ENCODE measurements at regions of chr2 and their contacts with region 1.

Region 1: GRCh38 chr2:188983427-188984064 is 9.4 kb downstream of the COL3A1 start:
- DNase-seq: no peak

Region 2: GRCh38 chr2:188524519-188525113 is 458.9 kb before region 1 on chr2:
- intact Hi-C with region 1: loop called (anchors 10 kb)
- DNase-seq: peak in 29 of 42 donors; percentile 3 to 63 (median 20)

Region 3: GRCh38 chr2:189252991-189253675 is 269.6 kb after region 1 on chr2:
- intact Hi-C with region 1: no loop called
- DNase-seq: no peak